Dendritic cell treated with granulocyte-macrophage colony-stimulating factor and Interleukin-4, amounts not matched to agents 40 ng/mL and 50 ng/mL, for 4 days (primary cell): ENCODE measurements at regions of chr22 and their contacts with region 1.

Region 1: DNA sequence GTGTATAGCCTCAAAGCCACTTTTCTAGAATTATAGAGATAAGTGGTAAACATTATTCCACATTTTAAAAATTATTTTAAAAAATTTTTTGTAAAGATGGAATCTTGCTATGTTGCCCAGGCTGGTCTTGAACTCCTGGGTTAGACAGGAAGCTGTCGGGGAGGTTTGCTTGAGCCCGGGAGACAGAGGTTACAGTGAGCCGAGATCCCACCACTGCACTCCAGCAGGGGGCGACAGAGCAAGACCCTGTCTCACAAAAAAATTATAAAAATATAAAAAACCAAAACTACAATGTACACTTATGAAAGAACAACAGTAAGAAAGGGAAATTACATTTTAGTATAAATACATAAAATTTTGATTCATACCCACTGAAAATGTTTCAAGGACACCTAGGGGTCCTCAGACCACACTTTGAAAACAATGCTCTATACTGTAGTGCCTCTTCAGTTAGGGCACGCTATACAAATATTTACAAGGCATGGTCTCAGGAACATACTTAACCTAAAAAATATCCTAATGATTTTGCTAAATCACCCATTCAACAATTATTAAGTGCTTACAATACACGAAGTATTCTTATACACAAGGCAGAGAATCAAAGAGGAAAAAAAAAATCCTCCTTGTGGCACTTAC is 111.2 kb downstream of the MRTFA start:
- H3K4me3 Mint-ChIP-seq: no peak overlapping the region
- H3K27ac Mint-ChIP-seq: no peak overlapping the region
- H3K4me1 Mint-ChIP-seq: peaks cover 17% of the 10 kb centered on the region
- H3K27me3 Mint-ChIP-seq: no peaks in the 10 kb centered on the region

Region 2: DNA sequence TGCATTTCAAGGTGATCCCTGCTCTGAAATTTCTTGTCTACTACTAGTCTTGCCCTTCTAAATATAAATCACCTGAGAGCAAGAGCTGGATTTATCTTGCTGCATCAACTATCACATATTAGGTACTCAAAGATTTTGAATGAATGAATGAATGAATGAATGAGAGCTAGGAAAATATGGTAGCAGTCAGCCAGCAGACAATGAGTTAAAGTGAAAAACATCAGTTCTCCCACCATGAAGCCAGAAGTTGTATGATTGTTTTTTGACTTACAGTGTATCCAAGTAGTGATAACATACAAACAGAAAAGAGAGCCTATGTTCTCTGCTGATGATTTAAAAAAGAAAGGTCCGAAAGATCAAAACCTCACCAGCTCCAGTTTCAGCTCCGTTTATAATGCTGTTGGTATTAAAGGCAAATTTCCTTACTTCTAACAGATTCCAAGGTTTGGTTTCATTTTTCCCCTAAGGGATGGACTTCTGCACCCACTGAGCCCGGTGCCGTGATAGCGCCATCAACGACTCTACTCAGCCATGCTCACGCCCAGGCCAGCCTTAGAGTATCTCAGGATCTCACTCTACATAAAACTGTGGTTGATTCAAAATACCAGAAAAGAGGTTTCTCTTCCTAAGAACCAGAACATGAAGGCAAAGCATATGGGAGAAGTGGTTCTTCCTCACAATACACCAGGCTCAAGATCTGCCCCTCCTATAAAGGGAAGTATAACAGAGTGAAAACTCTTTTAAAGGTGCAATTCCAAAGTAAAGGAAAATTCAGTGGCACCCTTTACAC is 63.0 kb before region 1 on chr22:
- intact Hi-C with region 1: no loop called
- H3K4me3 Mint-ChIP-seq: peak overlapping the region; percentile 91
- H3K27ac Mint-ChIP-seq: peak overlapping the region; percentile 89
- H3K4me1 Mint-ChIP-seq: peaks cover 64% of the 10 kb centered on the region
- H3K27me3 Mint-ChIP-seq: no peaks in the 10 kb centered on the region

Region 3: DNA sequence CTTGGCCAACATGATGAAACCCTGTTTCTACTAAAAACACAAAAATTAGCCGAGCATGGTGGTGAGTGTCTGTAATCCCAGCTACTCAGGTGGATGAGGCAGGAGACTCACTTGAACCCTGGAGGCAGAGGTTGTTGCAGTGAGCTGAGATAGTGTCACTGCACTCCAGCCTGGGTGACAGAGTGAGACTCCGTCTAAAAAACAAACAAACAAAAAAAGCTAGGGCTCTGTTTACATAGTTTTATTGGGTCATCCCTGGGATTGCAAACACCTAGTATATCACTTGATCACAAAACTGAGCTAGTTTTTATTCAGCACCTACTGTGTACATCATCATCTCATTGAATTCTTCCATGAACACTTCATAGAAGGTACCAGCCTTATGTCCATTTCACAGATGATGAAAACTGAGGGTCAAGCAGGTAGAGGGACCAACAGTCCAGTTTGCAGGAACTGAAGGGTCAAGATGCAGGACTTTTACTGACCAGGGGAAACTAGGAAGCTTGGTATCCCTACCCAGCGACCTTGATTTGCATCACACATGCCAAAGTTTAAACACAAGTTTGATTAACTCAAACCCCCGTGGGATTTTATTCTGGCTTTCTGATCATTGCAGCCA is 120.3 kb after region 1 on chr22:
- intact Hi-C with region 1: loop called (anchors 1 kb)
- H3K4me3 Mint-ChIP-seq: no peak overlapping the region
- H3K27ac Mint-ChIP-seq: no peak overlapping the region
- H3K4me1 Mint-ChIP-seq: peaks cover 6% of the 10 kb centered on the region
- H3K27me3 Mint-ChIP-seq: no peaks in the 10 kb centered on the region